Lower leg skin (tissue), 4 donors: ENCODE measurements at regions of chr22 and their contacts with region 1.

Region 1: GRCh38 chr22:40709752-40710413 is 30.6 kb downstream of the MCHR1 start:
- DNase-seq: no peak
- H3K4me3 ChIP-seq: no peak overlapping the region
- CTCF ChIP-seq: no peak
- POLR2A ChIP-seq: no peak

Region 2: GRCh38 chr22:40651563-40652501 is 58.1 kb before region 1 on chr22:
- intact Hi-C with region 1: loop called (anchors 10 kb)
- DNase-seq: peak; percentile 96 to 99
- H3K4me3 ChIP-seq: peak overlapping the region; percentile 32
- CTCF ChIP-seq: no peak
- POLR2A ChIP-seq: peak in 1 of 2 donors; percentile 21